ENCODE measurements at regions of chr15 and their contacts with region 1.

Region 1: DNA sequence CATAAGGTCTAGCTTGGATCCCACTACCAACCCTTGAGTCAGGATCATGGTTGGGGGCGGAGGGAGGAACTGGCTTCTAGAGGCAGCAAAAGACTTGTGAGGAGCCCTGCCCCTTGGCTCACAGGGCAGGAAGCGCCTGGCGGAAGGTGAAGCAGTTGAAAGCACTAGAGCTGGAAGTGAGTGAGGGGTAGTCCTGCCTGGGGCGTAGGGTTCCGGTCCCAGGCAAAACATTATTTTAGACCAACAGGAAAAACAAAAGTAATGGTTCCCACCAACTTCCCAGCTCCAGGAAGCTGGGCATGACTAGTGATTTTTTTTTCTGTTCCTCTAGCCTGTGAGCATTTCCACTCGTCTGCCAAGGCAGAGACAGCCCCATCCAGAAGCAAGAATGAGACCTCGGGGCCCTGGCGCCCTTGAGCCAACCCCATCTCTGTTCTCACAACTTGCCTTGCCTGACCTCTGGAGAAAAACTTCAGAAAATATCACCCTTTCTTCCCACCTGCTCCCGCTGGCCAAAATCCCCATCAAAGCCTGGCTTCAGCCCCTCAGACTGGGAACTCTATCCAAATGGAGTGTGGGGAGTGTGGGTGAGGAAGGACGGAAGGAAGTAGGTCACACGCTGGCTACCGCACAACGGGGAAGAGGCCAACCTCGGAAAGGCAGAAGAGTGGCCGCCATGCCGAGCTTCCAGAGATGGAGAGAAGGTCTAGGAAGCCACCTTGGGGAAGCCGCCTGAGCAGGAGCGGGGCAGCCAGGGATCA is 57.5 kb downstream of the RBPMS2 start:
- DNase-seq: no peak
- H3K4me3 ChIP-seq: no peak overlapping the region
- H3K27ac ChIP-seq: no peak overlapping the region
- H3K4me1 ChIP-seq: no peaks in the 10 kb centered on the region
- H3K27me3 ChIP-seq: no peaks in the 10 kb centered on the region
- CTCF ChIP-seq: no peak

Region 2: DNA sequence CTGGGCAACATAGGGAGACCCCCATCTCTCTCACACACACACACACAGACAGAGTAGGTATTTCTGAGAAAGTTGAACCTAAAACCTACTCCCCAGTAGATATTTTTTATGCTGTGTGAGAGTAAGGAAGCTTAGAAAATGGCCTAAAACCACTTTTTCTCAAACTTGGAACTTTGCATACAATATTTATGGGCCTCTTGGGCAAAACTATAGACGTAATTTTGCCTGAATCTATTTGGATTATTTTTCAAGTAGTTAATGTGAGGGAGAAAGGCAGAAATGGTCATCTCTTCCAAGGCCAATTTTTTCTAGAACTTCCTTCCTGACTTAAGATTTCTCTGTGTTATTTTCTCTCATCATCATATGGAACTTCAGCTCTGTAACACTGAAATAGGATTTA is 175.8 kb before region 1 on chr15:
- CTCF ChIA-PET with region 1: interaction called, 12 read pairs
- POLR2A ChIA-PET with region 1: no interaction called
- intact Hi-C with region 1: no loop called
- DNase-seq: no peak
- H3K4me3 ChIP-seq: no peak overlapping the region
- H3K27ac ChIP-seq: no peak overlapping the region
- H3K4me1 ChIP-seq: no peaks in the 10 kb centered on the region; the same call in 1 of the 2 replicates
- H3K27me3 ChIP-seq: no peaks in the 10 kb centered on the region
- CTCF ChIP-seq: no peak

Region 3: GRCh38 chr15:64749999-64750657 is 32.2 kb after region 1 on chr15:
- CTCF ChIA-PET with region 1: no interaction called
- POLR2A ChIA-PET with region 1: no interaction called
- intact Hi-C with region 1: no loop called
- DNase-seq: peak in 1 of 2 experiments; percentile 5
- H3K4me3 ChIP-seq: no peak overlapping the region
- H3K27ac ChIP-seq: no peak overlapping the region
- H3K4me1 ChIP-seq: peaks cover 17% of the 10 kb centered on the region
- H3K27me3 ChIP-seq: no peaks in the 10 kb centered on the region
- CTCF ChIP-seq: no peak

Measured in PC-9 (cell line).